H1 (cell line): ENCODE measurements at regions of chr14 and their contacts with region 1.

Region 1: DNA sequence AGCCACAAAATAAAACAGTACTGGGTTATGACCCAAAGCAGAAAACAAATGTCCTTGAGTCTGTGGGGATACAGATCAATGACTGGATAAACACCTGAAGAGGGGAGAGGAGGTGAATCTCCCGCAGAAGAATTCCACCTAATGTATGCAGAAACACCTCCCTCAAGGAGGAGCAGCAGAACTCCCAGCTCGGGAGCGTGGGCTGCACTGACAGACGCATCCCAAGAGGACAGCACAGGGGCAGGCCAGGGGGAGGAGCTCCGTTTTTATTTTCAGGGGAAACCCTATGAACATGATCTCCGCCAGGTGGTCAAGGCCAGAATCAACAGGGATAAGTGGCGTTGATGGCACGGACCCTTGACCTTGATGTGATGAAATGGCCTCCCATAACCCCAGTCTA is 41.8 kb upstream of the PPP2R5C start:
- DNase-seq: no peak
- H3K4me3 ChIP-seq: no peak overlapping the region
- H3K27ac ChIP-seq: no peak overlapping the region
- H3K4me1 ChIP-seq: peaks cover 2 to 11% (median 7%) of the 10 kb centered on the region in 4 experiments; a peak in 6 of 7 replicates
- H3K27me3 ChIP-seq: peaks cover 0 to 1% (median 0%) of the 10 kb centered on the region in 4 experiments; a peak in 1 of 7 replicates
- CTCF ChIP-seq: peak in 2 of 3 experiments; percentile 10 to 22; a peak in 3 of 4 replicates
- EP300 ChIP-seq: no peak
- POLR2A ChIP-seq: no peak
- RAD21 ChIP-seq: 0 out of 4 replicates have a peak, but pooled peaks of 1 of the 2 experiments have one; percentile 2

Region 2: DNA sequence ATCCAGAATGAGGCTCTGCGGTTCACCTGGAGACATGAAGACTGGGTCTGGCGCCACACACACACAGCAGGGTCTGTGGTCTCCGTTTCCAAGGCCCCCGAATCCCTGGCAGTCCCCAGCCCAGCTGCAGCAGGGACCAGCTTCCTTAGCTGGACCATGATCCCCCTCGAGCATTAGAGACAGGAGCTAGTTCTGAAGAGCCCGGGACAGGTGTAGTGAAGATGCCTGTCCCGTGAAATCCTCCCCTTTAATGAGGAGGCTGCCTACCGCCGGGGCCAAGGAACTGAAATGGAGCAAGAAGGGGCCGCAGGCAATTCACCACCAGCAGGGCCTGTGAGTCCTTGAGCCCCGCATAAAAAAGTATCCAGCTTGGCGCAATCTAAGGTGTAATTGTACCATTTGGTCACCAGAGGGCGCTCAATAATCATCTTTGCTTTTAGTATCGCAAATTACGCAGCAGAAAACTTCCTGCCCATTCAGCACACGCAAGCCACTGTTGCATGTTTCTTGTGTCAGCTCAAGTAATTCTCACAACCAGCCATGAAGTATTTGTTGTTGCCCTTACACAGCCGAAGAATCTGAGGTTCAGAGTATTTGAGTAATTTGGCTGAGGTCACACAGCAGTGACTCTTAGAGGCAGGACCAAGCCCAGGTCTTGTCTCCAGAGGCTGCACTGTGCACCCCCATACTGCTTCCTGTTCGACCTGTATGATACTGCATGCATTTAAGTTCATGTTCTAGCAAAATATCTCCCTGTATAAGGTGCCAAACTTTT is 12.5 kb before region 1 on chr14:
- CTCF ChIA-PET with region 1: interaction called, 12 read pairs
- POLR2A ChIA-PET with region 1: interaction called, 3 read pairs
- DNase-seq: peak in 1 of 2 experiments; percentile 59
- H3K4me3 ChIP-seq: no peak overlapping the region
- H3K27ac ChIP-seq: no peak overlapping the region
- H3K4me1 ChIP-seq: peaks cover 0 to 23% (median 10%) of the 10 kb centered on the region in 4 experiments; a peak in 6 of 7 replicates
- H3K27me3 ChIP-seq: peaks cover 4 to 32% (median 20%) of the 10 kb centered on the region in 4 experiments
- CTCF ChIP-seq: peak; percentile 9 to 83 (median 78)
- EP300 ChIP-seq: no peak
- POLR2A ChIP-seq: no peak
- RAD21 ChIP-seq: peak; percentile 95 to 96

Region 3: DNA sequence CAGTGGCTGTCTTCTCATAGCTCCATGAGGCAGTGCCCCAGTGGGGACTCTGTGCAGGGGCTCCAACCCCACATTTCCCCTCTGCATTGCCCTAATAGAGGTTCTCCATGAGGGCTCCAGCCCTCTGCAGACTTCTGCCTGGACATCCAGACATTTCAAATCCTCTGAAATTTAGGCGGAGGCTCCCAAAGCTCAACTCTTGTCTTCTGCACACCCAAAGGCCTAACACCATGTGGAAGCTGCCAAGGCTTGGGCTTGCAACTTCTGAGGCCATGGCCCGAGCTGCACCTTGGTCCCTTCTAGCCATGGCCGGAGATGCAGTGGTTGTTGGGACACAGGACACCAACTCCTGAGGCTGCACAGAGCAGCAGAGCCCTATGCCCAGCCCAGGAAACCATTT is 21.3 kb after region 1 on chr14:
- CTCF ChIA-PET with region 1: no interaction called
- POLR2A ChIA-PET with region 1: no interaction called
- DNase-seq: no peak
- H3K4me3 ChIP-seq: no peak overlapping the region
- H3K27ac ChIP-seq: no peak overlapping the region
- H3K4me1 ChIP-seq: no peaks in the 10 kb centered on the region
- H3K27me3 ChIP-seq: no peaks in the 10 kb centered on the region
- CTCF ChIP-seq: no peak
- EP300 ChIP-seq: no peak
- POLR2A ChIP-seq: no peak
- RAD21 ChIP-seq: no peak